Esophagus squamous epithelium (tissue), 5 donors: ENCODE measurements at regions of chr11 and their contacts with region 1.

Region 1: GRCh38 chr11:64652586-64653387 is 61.8 kb downstream of the SLC22A12 start:
- DNase-seq: no peak
- H3K4me3 ChIP-seq: no peak overlapping the region
- H3K27ac ChIP-seq: no peak overlapping the region
- H3K4me1 ChIP-seq: peaks cover 0 to 8% (median 0%) of the 10 kb centered on the region in 3 donors
- H3K27me3 ChIP-seq: peaks cover 0 to 39% (median 0%) of the 10 kb centered on the region in 4 donors
- CTCF ChIP-seq: peak; percentile 79 to 87 (median 82)
- POLR2A ChIP-seq: no peak

Region 2: DNA sequence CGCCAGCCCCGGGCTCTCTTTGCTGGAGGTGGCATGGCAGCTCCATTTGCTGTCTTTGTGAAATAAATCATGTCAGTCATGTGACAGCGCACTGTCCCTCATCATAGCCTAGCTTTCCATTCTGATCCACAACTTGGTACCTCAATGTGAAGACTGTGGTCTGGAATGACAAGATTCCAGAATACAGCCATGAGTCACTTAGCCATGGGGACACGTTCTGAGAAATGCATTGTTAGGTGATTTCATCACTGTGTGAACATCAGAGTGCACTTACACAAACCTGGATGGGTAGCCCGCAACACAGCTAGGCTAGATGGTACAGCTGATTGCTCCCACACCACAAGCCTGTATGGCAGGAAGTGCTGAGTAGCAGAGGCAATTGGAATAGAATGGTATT is 266.5 kb before region 1 on chr11:
- intact Hi-C with region 1: loop called (anchors 10 kb)
- DNase-seq: no peak
- H3K4me3 ChIP-seq: no peak overlapping the region
- H3K27ac ChIP-seq: no peak overlapping the region
- H3K4me1 ChIP-seq: no peaks in the 10 kb centered on the region
- H3K27me3 ChIP-seq: peaks cover 0 to 33% (median 0%) of the 10 kb centered on the region in 4 donors
- CTCF ChIP-seq: no peak
- POLR2A ChIP-seq: no peak

Region 3: GRCh38 chr11:64580412-64580811 is 72.4 kb before region 1 on chr11:
- intact Hi-C with region 1: no loop called
- DNase-seq: no peak
- H3K4me3 ChIP-seq: no peak overlapping the region
- H3K27ac ChIP-seq: no peak overlapping the region
- H3K4me1 ChIP-seq: no peaks in the 10 kb centered on the region
- H3K27me3 ChIP-seq: peaks cover 0 to 4% (median 0%) of the 10 kb centered on the region in 4 donors
- CTCF ChIP-seq: no peak
- POLR2A ChIP-seq: no peak

Region 4: DNA sequence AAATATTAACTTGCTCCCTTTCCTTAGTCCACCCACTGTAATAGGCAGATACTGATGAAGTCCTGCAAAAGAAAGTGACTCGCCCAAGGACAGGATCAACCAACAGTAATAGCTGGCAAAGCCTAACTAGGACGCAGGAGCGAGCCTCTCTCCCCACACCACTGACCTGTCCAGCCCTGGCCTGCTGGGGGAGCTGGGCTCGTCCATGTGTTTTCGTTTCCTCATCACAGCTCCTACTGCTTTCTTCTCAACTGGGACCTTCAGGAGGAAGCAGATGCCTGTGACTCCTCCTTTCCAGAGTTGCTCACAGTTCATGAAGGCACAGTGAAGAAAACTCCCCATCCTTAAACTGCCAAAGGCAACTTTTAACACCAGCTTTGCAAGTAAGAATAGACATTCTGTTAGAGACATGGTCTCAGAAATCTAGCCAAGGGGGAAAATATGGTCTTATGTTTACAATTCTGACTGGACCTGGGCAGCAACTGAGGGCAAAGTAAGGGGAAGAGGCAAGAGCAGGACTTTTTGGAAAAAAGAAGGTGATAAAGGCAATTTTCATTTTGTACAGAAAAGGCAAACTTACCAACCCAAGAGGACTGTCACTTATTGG is 294.5 kb after region 1 on chr11:
- intact Hi-C with region 1: no loop called
- DNase-seq: no peak
- H3K4me3 ChIP-seq: no peak overlapping the region
- H3K27ac ChIP-seq: no peak overlapping the region
- H3K4me1 ChIP-seq: no peaks in the 10 kb centered on the region
- H3K27me3 ChIP-seq: peaks cover 0 to 4% (median 0%) of the 10 kb centered on the region in 4 donors
- CTCF ChIP-seq: no peak
- POLR2A ChIP-seq: no peak

Region 5: GRCh38 chr11:64990222-64990923 is 337.6 kb after region 1 on chr11:
- intact Hi-C with region 1: no loop called
- DNase-seq: no peak
- H3K4me3 ChIP-seq: peak overlapping the region in 1 of 4 donors; percentile 28
- H3K27ac ChIP-seq: peak overlapping the region in 2 of 4 donors; percentile 21 to 43
- H3K4me1 ChIP-seq: peaks cover 0 to 19% (median 5%) of the 10 kb centered on the region in 3 donors
- H3K27me3 ChIP-seq: no peaks in the 10 kb centered on the region
- CTCF ChIP-seq: no peak
- POLR2A ChIP-seq: no peak